ENCODE measurements at regions of chr12 and their contacts with region 1.

Region 1: DNA sequence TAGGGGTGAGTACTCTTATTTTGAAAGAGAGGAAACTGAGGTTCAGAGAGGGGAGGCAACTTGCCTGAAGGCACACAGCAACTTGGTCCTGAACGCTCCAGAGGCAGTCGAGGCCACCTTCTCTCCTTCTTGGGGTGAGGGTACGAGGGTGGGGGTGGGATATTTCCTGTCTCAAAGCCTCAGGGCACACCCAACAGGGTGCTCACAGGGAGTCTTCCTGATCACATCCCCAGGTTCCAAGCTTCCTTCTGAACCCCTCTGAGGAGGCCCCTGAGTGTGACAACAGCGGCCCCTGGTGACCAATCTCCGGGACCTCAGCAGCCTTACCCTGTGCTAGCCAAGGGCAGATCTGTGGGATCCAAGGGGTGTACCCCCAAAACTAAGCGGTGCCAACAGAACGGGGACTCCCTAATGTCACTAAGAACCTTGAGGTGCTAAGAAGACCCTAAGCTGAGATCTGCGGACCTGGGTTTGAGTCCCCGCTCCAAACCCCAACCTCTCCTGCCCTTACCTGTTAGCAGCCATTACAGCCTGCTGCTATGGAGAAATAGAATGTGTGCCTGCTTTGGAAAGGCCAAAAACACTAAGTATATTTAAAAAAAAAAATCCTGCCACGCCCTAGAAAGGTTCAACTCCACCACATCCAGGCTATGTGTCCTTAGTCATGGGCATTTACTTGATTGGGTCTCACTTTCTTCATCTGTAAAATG is 57.9 kb downstream of the TRPV4 start:
- DNase-seq: peak; percentile 65 to 76
- H3K4me3 ChIP-seq: no peak overlapping the region
- H3K27ac ChIP-seq: no peak overlapping the region
- H3K4me1 ChIP-seq: peaks cover 0 to 8% of the 10 kb centered on the region in 2 donors
- H3K27me3 ChIP-seq: no peaks in the 10 kb centered on the region
- CTCF ChIP-seq: peak; percentile 70 to 85 (median 80)
- POLR2A ChIP-seq: no peak

Region 2: GRCh38 chr12:109421355-109422087 is 353.8 kb before region 1 on chr12:
- intact Hi-C with region 1: loop called (anchors 5 kb)
- DNase-seq: no peak
- H3K4me3 ChIP-seq: no peak overlapping the region
- H3K27ac ChIP-seq: no peak overlapping the region
- H3K4me1 ChIP-seq: no peaks in the 10 kb centered on the region
- H3K27me3 ChIP-seq: no peaks in the 10 kb centered on the region
- CTCF ChIP-seq: no peak
- POLR2A ChIP-seq: no peak

Region 3: DNA sequence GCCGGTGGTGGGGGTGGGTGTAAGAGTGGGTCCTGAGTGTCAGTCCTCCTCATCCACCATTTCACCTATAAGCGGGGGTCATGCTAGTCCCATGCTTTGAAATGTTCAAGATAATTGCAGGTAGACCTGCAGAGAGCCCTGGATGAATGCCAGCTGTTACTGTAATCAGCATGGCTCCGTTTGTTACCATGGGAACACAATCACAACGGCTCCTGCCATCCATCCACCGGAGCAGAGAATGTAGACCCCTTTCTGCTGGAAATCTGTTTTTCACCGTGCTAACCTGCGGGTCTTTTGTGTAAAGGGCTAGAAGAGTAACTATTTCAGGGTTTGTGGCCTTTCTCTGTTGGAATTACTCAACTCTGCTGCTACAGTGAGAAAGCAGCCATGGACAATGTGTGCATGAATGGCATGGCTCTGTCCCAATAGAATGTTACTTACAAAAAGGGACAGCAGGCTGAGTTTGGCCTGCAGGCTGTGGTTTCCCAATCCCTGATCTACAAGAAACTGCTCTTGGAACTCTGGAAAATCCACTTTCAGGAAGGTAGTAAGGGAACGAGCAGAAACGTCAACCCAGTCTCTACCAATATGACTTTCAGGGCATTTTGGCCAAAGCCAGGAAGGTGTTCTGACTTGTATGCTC is 334.4 kb before region 1 on chr12:
- intact Hi-C with region 1: no loop called
- DNase-seq: peak in 1 of 2 donors; percentile 38
- H3K4me3 ChIP-seq: no peak overlapping the region
- H3K27ac ChIP-seq: peak overlapping the region; percentile 50 to 62 (median 50)
- H3K4me1 ChIP-seq: peaks cover 37 to 54% of the 10 kb centered on the region in 2 donors
- H3K27me3 ChIP-seq: no peaks in the 10 kb centered on the region
- CTCF ChIP-seq: no peak
- POLR2A ChIP-seq: no peak

Region 4: GRCh38 chr12:109518820-109519665 is 256.3 kb before region 1 on chr12:
- intact Hi-C with region 1: loop called (anchors 2 kb)
- DNase-seq: peak; percentile 67 to 71
- H3K4me3 ChIP-seq: no peak overlapping the region
- H3K27ac ChIP-seq: peak overlapping the region in 2 of 3 donors; percentile 40 to 52
- H3K4me1 ChIP-seq: peaks cover 0 to 11% of the 10 kb centered on the region in 2 donors
- H3K27me3 ChIP-seq: no peaks in the 10 kb centered on the region
- CTCF ChIP-seq: peak; percentile 66 to 81 (median 74)
- POLR2A ChIP-seq: no peak

Region 5: GRCh38 chr12:109685574-109686447 is 89.5 kb before region 1 on chr12:
- intact Hi-C with region 1: no loop called
- DNase-seq: no peak
- H3K4me3 ChIP-seq: no peak overlapping the region
- H3K27ac ChIP-seq: no peak overlapping the region
- H3K4me1 ChIP-seq: no peaks in the 10 kb centered on the region
- H3K27me3 ChIP-seq: no peaks in the 10 kb centered on the region
- CTCF ChIP-seq: no peak
- POLR2A ChIP-seq: no peak